ENCODE measurements at regions of chr2 and their contacts with region 1.

Region 1: DNA sequence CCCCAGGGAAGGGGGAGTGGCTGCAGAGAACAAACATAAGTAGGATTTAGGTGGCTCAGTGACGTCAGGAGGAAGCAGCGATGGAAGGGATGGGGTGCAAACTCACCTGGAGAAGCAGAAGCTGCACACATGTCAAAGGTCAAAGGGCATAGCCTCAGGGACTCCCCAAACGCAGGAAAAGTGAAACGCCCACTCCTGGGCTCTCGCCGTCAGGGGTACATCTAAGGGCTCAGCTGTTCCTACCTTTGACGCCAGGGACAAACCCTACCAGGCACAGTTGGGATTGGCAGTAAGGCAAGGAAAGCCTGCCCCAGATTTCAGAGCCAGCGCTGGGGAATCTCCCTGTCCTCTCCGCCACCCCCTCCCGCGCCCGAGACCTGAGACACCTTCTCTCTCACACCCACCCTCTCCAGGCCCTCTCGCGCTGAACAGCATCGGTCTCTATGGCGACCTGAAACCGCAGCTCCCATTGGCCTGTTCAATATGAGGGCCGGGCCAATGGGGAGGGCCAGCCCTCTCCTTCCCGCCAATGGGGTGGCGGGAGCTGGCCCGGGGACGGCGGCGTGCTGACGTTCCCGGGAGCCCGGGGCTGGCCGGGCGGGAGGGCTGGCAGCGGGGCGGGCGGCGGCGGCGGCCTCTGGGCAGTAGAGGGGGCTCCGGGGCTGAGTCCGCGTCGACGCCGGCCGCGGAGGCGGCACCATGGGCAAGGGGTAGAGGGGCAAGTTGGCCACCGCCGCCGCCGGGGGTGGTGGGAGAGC is at the starts of genes CCDC148 and PKP4:
- DNase-seq: peak; percentile 97
- H3K4me3 ChIP-seq: peak within 1 kb of the TSS; percentile 92 to 99 (median 96)
- H3K27ac ChIP-seq: peak within 1 kb of the TSS; percentile 94 to 98 (median 96)
- H3K4me1 ChIP-seq: peaks cover 35 to 42% (median 37%) of the 10 kb centered on the region in 4 donors
- H3K27me3 ChIP-seq: no peaks in the 10 kb centered on the region
- CTCF ChIP-seq: peak in 1 of 3 experiments; percentile 26
- EP300 ChIP-seq: no peak
- POLR2A ChIP-seq: no peak
- total RNA-seq, gene CCDC148: 2.1 to 3.7 (median 2.9) TPM
- total RNA-seq, gene PKP4: 79.7 to 131 (median 93.0) TPM

Region 2: GRCh38 chr2:158191076-158191895 is 265.2 kb before region 1 on chr2:
- intact Hi-C with region 1: loop called (anchors 10 kb)
- DNase-seq: no peak
- H3K4me3 ChIP-seq: peak overlapping the region; percentile 27 to 36 (median 34)
- H3K27ac ChIP-seq: peak overlapping the region; percentile 18 to 49 (median 36)
- H3K4me1 ChIP-seq: peaks cover 0 to 17% (median 15%) of the 10 kb centered on the region in 4 donors
- H3K27me3 ChIP-seq: no peaks in the 10 kb centered on the region
- CTCF ChIP-seq: no peak
- EP300 ChIP-seq: no peak
- POLR2A ChIP-seq: no peak

Region 3: GRCh38 chr2:158600155-158600802 is 143.8 kb after region 1 on chr2:
- intact Hi-C with region 1: loop called (anchors 10 kb)
- DNase-seq: no peak
- H3K4me3 ChIP-seq: no peak overlapping the region
- H3K27ac ChIP-seq: peak overlapping the region; percentile 6 to 43 (median 18)
- H3K4me1 ChIP-seq: peaks cover 16 to 26% (median 19%) of the 10 kb centered on the region in 4 donors
- H3K27me3 ChIP-seq: no peaks in the 10 kb centered on the region
- CTCF ChIP-seq: no peak
- EP300 ChIP-seq: no peak
- POLR2A ChIP-seq: no peak

Region 4: GRCh38 chr2:158753641-158754611 is 297.4 kb after region 1 on chr2:
- intact Hi-C with region 1: loop called (anchors 5 kb)
- DNase-seq: no peak
- H3K4me3 ChIP-seq: peak overlapping the region; percentile 21 to 42 (median 26)
- H3K27ac ChIP-seq: no peak overlapping the region
- H3K4me1 ChIP-seq: peaks cover 9 to 14% (median 11%) of the 10 kb centered on the region in 4 donors
- H3K27me3 ChIP-seq: no peaks in the 10 kb centered on the region
- CTCF ChIP-seq: peak; percentile 81 to 91 (median 85)
- EP300 ChIP-seq: no peak
- POLR2A ChIP-seq: no peak

Measured in esophagus muscularis mucosa (tissue), 4 donors.